Sigmoid colon (tissue), 7 donors: ENCODE measurements at regions of chr11 and their contacts with region 1.

Region 1: DNA sequence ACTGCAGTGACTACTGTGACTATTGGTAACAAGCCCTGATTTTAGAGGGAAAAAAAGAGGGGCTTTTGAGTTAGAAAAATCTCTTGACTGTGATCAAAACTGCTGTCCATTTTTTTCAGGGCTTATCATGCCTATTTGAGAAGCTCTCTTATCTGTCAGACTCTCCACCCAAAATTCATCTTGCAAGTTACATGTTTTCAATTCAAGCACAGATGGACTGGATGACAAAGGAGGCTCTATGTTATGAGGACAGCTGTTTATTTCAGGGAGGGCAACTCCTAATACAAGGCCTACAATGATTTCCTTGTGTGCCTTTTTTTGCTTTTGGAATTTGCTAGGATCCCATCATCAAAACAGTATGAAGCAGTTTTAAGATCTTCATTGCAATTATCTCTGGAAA is 35.2 kb upstream of the USP47 start:
- DNase-seq: no peak
- H3K4me3 ChIP-seq: no peak overlapping the region
- H3K27ac ChIP-seq: peak overlapping the region in 3 of 4 donors; percentile 21 to 81 (median 68)
- H3K4me1 ChIP-seq: peaks cover 0 to 41% (median 31%) of the 10 kb centered on the region in 4 donors
- H3K27me3 ChIP-seq: no peaks in the 10 kb centered on the region
- CTCF ChIP-seq: no peak
- EP300 ChIP-seq: no peak
- POLR2A ChIP-seq: no peak

Region 2: GRCh38 chr11:11841723-11842420 is 35.3 kb after region 1 on chr11 and contains the start of gene USP47:
- intact Hi-C with region 1: loop called (anchors 5 kb)
- DNase-seq: peak; percentile 93
- H3K4me3 ChIP-seq: peak within 1 kb of the TSS; percentile 65 to 86 (median 82)
- H3K27ac ChIP-seq: peak within 1 kb of the TSS; percentile 94 to 99 (median 98)
- H3K4me1 ChIP-seq: peaks cover 2 to 44% (median 36%) of the 10 kb centered on the region in 4 donors
- H3K27me3 ChIP-seq: no peaks in the 10 kb centered on the region
- CTCF ChIP-seq: peak in 3 of 4 experiments; percentile 7 to 72 (median 63)
- EP300 ChIP-seq: peak in 1 of 4 donors; percentile 1
- POLR2A ChIP-seq: peak; percentile 65 to 84
- total RNA-seq, gene USP47: 84.9 to 105 (median 103) TPM